Endothelial cell of umbilical vein (primary cell): ENCODE measurements at regions of chr9 and their contacts with region 1.

Region 1: DNA sequence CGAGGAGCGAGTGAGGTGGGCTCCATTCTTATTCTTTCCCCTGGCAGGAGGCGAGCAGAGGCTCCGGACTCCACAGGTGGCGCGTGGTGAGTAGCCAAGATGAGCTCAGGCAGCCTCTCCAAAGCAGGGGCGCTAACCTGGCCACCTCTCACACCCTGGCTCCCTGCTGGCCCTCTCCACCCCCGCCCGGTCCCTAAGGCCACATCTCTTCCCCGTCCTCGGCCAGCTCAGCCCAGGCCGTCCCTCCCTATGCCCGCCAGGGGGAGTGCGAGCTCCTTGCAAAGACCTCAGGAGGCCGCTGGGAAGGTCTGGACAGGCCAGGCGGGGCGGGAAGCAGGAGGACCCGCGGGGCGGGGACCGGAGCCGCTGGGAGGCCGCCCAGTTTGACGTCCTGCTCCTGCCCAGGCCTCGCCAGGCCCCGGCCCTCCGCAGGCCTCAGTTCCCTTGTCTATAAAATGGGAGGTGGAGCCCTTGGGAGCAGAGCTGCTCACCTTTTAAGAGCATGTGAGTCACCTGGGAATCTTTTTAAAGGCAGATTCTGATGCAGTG is 46.3 kb upstream of the GGTA1 start:
- DNase-seq: peak; percentile 91
- H3K4me3 ChIP-seq: no peak overlapping the region
- H3K27ac ChIP-seq: no peak overlapping the region
- H3K4me1 ChIP-seq: no peaks in the 10 kb centered on the region
- H3K27me3 ChIP-seq: peaks cover 0 to under 1% of the 10 kb centered on the region in 2 experiments
- CTCF ChIP-seq: peak; percentile 98 to 99
- POLR2A ChIP-seq: no peak

Region 2: DNA sequence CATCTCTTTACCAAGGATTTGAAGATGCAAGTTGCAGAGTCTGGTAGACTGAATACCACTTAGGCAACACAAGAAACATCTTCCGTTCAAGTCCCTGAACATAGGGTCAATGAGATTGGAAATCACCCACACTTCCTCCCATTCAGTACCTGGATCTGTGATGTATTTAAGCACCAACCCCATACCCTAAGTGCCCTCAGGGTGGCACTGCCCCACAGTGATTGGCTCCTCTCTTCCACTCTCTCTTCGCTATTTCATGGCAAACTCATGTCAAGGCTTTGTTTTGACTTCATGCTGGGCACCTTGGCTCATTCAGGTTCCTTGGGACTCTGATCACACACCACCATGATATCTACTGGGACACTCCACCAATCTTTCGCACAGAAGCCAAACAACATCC is 100.0 kb before region 1 on chr9:
- CTCF ChIA-PET with region 1: no interaction called
- POLR2A ChIA-PET with region 1: no interaction called
- dilution Hi-C with region 1: no loop called
- intact Hi-C with region 1: no loop called
- DNase-seq: no peak
- H3K4me3 ChIP-seq: no peak overlapping the region
- H3K27ac ChIP-seq: no peak overlapping the region
- H3K4me1 ChIP-seq: no peaks in the 10 kb centered on the region
- H3K27me3 ChIP-seq: peaks cover 34 to 46% of the 10 kb centered on the region in 2 experiments
- CTCF ChIP-seq: no peak
- POLR2A ChIP-seq: no peak

Region 3: DNA sequence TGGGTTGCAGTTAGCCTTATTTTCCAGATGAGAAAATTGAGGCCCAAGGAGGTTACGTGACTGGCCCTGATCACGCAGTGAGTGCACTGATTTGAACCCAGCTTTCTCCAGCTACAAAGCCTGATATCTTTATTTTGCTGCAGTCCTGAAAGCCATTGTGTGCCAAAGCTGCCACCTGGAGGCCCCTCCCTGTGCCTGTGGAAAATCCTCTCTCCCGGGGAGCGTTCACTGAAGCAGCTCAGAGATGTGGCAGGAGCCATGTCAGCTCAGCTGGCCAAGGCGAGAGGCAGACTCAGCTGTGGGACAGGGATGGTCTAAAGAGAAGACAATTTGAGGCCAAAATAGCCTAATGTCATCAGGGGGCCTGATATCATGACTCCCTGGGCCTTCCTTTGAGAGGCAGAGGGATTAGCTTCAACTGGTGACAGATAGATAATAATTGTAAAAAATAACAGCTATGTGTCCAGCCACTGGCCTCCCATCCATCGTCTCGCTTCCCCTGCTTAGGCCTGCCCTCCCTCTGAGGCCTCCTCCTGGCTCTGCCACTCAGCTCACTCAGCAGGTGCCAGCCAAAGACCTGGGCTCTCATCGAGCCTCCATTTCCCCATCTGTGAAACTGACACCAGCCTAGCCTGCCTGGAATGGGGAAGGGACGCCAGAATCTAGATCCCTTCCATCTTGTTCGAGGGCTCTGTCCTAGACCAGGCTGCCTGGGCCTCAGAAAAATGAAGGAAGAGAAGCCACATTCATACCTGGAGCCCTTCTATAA is 28.0 kb after region 1 on chr9:
- CTCF ChIA-PET with region 1: interaction called, 29 read pairs
- POLR2A ChIA-PET with region 1: interaction called, 5 read pairs
- dilution Hi-C with region 1: no loop called
- intact Hi-C with region 1: loop called (anchors 2 kb)
- DNase-seq: no peak
- H3K4me3 ChIP-seq: no peak overlapping the region
- H3K27ac ChIP-seq: no peak overlapping the region
- H3K4me1 ChIP-seq: peaks cover 7% of the 10 kb centered on the region
- H3K27me3 ChIP-seq: no peaks in the 10 kb centered on the region
- CTCF ChIP-seq: no peak
- POLR2A ChIP-seq: no peak

Region 4: DNA sequence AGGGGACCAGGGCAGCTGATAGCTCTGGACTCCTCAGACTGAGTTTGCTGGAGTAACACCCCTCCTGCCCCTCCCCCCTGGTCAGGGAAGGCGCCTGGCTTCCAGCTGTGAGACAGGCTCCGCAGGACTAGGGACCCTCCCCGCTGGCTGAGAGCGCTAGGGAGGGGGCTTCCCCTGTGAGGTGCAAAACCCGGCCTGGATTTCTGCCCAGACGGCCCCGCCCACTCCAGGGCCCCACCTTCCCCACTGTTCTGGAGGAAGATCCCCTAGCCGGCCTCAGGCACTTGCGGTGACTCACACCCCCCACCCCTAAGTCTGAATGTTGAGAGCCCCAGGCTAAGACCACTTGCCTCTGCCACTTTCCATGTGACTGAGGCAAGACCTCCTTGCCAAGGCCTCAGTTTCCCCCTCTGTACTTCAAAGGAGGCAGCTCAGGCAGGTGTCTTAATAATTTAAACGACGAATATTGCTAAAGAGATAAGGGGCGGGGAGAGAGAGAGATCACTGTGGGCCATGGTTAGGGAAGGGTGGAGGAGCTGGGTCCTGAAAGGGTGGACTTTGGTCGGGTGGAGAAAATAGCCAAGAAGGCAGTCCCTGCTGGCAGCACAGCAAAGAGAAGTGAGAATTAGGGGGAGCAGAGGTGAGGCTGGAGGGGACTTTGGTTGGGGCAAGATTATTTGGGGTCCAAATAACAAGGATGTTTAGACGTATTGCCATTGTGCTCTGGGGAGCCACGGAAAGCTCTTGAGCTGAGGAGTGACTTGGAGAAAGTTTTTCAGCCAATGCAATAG is 104.5 kb after region 1 on chr9:
- CTCF ChIA-PET with region 1: interaction called, 4 read pairs
- POLR2A ChIA-PET with region 1: no interaction called
- dilution Hi-C with region 1: no loop called
- intact Hi-C with region 1: loop called (anchors 1 kb)
- DNase-seq: peak; percentile 65
- H3K4me3 ChIP-seq: no peak overlapping the region
- H3K27ac ChIP-seq: no peak overlapping the region
- H3K4me1 ChIP-seq: peaks cover 25% of the 10 kb centered on the region
- H3K27me3 ChIP-seq: no peaks in the 10 kb centered on the region
- CTCF ChIP-seq: no peak
- POLR2A ChIP-seq: no peak

Region 5: DNA sequence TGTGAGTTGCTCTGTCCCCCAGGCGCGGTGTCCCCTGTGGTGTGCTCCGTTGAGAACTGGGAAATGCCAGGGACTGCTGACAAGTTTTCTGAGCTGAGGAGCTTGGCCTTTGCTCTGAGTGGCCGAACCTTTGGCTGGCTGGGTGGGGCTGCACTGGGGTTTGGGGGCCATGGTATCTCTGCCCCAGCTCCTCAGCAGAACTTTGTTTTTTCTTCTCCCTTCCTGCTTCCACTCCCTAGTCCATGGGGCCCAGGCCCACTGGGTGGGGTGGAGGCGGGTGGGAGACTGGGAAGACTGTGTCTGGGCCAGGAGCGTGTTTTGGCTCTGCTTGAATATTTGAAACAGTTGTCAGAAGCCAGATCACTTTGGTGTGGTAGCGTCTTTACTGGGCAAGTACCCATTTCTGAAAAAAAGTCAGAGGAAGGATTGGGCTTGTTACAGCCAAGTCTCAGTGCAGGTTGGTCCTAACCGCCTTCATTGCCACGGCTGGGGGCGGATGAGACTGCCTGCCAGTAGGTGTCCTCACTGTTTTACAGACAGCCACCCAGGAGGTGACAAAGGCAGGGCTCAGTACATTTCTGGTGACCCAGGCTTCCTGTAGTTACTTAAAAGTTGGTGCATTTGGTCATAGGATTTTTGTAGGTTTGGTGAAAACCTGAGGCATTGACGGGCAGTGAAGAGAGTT is 198.2 kb after region 1 on chr9:
- CTCF ChIA-PET with region 1: interaction called, 8 read pairs
- POLR2A ChIA-PET with region 1: no interaction called
- dilution Hi-C with region 1: no loop called
- intact Hi-C with region 1: loop called (anchors 1 kb)
- DNase-seq: peak; percentile 57
- H3K4me3 ChIP-seq: peak overlapping the region; percentile 13 to 60 (median 38)
- H3K27ac ChIP-seq: peak overlapping the region; percentile 70
- H3K4me1 ChIP-seq: peaks cover 28% of the 10 kb centered on the region
- H3K27me3 ChIP-seq: no peaks in the 10 kb centered on the region
- CTCF ChIP-seq: peak; percentile 32 to 48
- POLR2A ChIP-seq: no peak

Region 6: DNA sequence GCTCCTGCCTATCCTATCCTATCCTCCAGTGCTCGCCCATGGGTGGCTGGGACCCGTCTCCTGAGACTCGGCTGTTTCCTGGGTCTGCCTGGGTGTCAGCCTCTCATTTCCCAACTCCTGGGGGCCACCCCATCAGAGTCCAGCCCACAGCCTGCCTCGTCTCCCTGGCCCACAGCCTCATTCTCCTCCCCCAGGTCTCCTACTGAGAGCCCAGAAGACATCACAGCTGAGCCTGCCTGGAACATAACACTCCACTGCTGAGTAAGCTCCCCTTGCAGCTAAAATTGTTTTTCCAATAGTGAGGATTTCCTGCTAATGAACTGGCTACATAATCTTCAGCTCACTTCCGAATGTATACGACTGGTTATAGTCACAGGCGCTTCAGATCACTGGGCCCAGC is 451.8 kb after region 1 on chr9:
- CTCF ChIA-PET with region 1: interaction called, 15 read pairs
- POLR2A ChIA-PET with region 1: no interaction called
- dilution Hi-C with region 1: no loop called
- intact Hi-C with region 1: loop called (anchors 1 kb)
- DNase-seq: peak; percentile 73
- H3K4me3 ChIP-seq: no peak overlapping the region
- H3K27ac ChIP-seq: no peak overlapping the region
- H3K4me1 ChIP-seq: peaks cover 10% of the 10 kb centered on the region
- H3K27me3 ChIP-seq: no peaks in the 10 kb centered on the region
- CTCF ChIP-seq: no peak
- POLR2A ChIP-seq: no peak

Region 7: GRCh38 chr9:122350638-122351355 is 804.8 kb after region 1 on chr9:
- CTCF ChIA-PET with region 1: interaction called, 3 read pairs
- POLR2A ChIA-PET with region 1: no interaction called
- dilution Hi-C with region 1: no loop called
- intact Hi-C with region 1: loop called (anchors 1 kb)
- DNase-seq: peak; percentile 77
- H3K4me3 ChIP-seq: no peak overlapping the region
- H3K27ac ChIP-seq: no peak overlapping the region
- H3K4me1 ChIP-seq: peaks cover 23% of the 10 kb centered on the region
- H3K27me3 ChIP-seq: no peaks in the 10 kb centered on the region
- CTCF ChIP-seq: peak; percentile 92 to 94
- POLR2A ChIP-seq: no peak